Thyroid gland (tissue), 4 donors: ENCODE measurements at regions of chr16 and their contacts with region 1.

Region 1: GRCh38 chr16:4402439-4403132 is 13.8 kb downstream of the CORO7 start:
- DNase-seq: peak; percentile 82 to 86
- H3K4me3 ChIP-seq: no peak overlapping the region
- H3K27ac ChIP-seq: no peak overlapping the region
- H3K4me1 ChIP-seq: peaks cover 0 to 6% of the 10 kb centered on the region in 2 donors
- H3K27me3 ChIP-seq: no peaks in the 10 kb centered on the region
- CTCF ChIP-seq: peak; percentile 85 to 97 (median 92)
- POLR2A ChIP-seq: no peak

Region 2: DNA sequence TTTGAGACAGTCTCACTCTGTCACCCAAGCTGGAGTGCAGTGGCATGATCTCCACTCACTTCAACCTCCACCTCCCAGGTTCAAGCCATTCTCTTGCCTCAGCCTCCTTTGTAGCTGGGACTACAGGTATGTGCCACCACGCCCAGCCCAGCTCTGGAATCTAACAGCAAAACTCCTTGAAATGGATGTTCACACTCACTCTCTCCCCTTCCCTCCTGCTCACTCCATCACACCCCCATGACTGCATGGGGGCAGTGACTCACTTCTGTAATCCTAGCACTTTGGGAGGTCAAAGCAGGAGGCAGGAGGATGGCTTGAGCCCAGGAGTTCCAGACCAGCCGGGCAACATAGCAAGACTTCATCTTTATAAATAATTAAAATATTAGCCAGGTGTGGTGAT is 118.6 kb before region 1 on chr16:
- intact Hi-C with region 1: no loop called
- DNase-seq: no peak
- H3K4me3 ChIP-seq: no peak overlapping the region
- H3K27ac ChIP-seq: no peak overlapping the region
- H3K4me1 ChIP-seq: peaks cover 5 to 7% of the 10 kb centered on the region in 2 donors
- H3K27me3 ChIP-seq: no peaks in the 10 kb centered on the region
- CTCF ChIP-seq: no peak
- POLR2A ChIP-seq: no peak

Region 3: DNA sequence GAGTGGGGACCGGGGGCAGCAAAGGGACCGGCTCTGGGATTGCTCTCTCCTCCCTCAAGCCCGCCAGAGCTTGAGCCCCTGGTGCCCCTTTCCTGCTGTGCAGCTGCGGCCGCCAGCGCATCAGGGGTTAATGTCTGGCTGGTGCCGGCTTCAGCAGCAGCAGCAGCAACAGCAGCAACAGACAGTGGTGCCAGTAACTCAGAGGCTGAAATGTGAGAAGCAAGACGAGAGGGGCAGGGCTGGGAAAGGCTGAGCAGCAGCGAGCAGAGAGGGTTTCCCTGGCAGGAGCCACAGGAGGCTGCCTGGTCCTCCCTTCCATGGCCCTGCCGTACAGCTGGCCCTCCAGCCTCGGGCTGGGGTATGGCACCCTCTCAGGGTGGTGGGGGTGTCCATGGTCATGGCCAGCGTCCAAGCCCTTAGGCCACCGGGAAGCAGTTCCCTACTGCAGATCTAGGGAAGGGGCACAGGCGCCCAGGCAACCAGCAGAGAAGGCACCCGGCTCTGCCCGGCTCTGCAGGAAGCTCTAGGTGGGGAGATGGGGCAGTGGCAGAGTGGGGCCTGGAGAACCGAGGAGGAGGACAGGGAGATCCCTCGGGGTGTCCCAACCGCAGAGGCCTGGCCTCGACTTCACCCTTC is 108.6 kb before region 1 on chr16:
- intact Hi-C with region 1: loop called (anchors 5 kb)
- DNase-seq: peak; percentile 76 to 79
- H3K4me3 ChIP-seq: no peak overlapping the region
- H3K27ac ChIP-seq: peak overlapping the region in 2 of 3 donors; percentile 51 to 61
- H3K4me1 ChIP-seq: peaks cover 16 to 32% of the 10 kb centered on the region in 2 donors
- H3K27me3 ChIP-seq: no peaks in the 10 kb centered on the region
- CTCF ChIP-seq: no peak
- POLR2A ChIP-seq: peak in 1 of 2 donors; percentile 30

Region 4: GRCh38 chr16:4360538-4361021 is 42.0 kb before region 1 on chr16:
- intact Hi-C with region 1: loop called (anchors 2 kb)
- DNase-seq: no peak
- H3K4me3 ChIP-seq: no peak overlapping the region
- H3K27ac ChIP-seq: no peak overlapping the region
- H3K4me1 ChIP-seq: peaks cover 10 to 15% of the 10 kb centered on the region in 2 donors
- H3K27me3 ChIP-seq: no peaks in the 10 kb centered on the region
- CTCF ChIP-seq: no peak
- POLR2A ChIP-seq: no peak